ENCODE measurements at regions of chr22 and their contacts with region 1.

Region 1: DNA sequence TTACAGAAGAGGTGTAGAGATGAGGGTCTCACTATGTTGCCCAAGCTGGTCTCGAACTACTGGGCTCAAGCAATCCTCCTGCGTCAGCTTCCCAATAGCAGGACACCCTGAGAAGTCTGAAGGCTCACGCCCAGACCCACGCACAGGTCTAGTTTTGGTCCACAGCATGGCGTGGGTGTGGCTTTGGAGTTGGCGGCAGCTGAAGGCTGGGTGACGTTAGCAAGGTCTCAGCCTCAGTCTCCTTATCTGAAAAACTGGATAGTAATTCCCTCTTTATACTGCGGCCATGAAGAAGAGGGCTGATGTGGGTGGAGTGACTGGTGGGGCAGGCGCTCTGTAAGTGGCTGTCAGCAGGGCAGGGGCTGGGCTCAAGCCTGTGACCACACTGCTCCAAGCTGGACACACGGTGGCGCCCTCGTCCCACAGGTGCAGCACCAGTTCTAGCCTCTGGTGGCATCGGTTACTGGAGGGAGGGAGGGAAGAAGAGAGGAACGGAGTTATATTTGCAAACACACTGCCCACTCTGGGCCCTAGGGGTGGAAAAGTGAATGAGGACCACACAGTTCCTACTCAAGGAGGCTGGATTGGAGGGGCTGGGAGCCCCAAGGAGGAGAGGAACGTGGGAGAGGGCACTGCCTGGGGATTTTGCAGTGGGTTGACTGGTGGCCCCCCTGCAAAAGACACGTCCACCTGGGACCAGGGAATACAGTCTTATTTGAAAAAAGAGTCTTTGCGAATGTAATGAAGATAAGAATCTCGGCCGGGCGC is 19.6 kb upstream of the CARD10 start:
- DNase-seq: peak; percentile 96
- H3K4me3 ChIP-seq: no peak overlapping the region
- H3K27ac ChIP-seq: no peak overlapping the region
- H3K4me1 ChIP-seq: peaks cover 11% of the 10 kb centered on the region
- H3K27me3 ChIP-seq: no peaks in the 10 kb centered on the region
- CTCF ChIP-seq: peak; percentile 95

Region 2: DNA sequence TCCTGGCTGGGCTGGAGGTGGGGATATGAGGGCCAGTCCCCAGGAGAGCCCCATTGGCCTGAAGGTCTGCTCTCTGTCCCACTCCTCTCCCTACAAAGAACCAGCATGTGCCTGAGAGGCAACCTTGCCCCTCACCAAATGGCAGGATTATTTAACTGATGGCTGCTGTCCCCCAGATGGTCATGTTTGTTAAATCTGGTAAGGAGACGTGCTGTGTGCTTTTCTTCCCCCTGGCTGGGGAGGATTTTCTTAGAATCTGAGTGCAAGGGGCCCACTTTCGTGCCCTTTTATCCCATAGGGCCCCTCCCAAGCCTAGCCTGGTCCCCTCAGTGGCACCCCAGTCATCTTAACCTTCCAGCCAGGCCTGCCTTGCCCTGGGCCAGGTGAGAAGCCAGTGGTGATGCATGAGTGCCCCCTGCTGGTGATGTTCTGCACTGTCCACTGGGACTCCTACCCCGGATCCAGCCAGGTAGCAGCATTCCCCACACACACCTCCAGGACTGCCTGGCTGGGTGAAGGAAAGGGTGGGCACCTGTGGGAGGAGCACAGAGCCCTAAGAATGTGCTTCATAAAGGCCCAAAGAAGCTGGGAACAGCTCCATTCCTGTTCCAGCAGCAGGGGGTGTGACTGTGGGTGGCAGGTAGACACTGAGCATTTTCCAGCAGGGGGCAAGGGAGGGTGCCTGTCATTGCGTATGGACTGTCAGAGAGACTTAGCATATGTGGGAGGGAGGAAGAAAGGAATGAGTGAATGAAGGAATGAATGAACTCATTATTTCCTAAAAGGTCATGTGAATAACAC is 81.5 kb before region 1 on chr22:
- intact Hi-C with region 1: no loop called
- DNase-seq: peak; percentile 86
- H3K4me3 ChIP-seq: no peak overlapping the region
- H3K27ac ChIP-seq: no peak overlapping the region
- H3K4me1 ChIP-seq: no peaks in the 10 kb centered on the region
- H3K27me3 ChIP-seq: no peaks in the 10 kb centered on the region
- CTCF ChIP-seq: peak; percentile 81

Region 3: GRCh38 chr22:37578002-37578401 is 39.2 kb after region 1 on chr22:
- intact Hi-C with region 1: loop called (anchors 5 kb)
- DNase-seq: no peak
- H3K4me3 ChIP-seq: no peak overlapping the region
- H3K27ac ChIP-seq: no peak overlapping the region
- H3K4me1 ChIP-seq: peaks cover 9% of the 10 kb centered on the region
- H3K27me3 ChIP-seq: no peaks in the 10 kb centered on the region
- CTCF ChIP-seq: no peak

Region 4: GRCh38 chr22:37594237-37594636 is 55.5 kb after region 1 on chr22:
- intact Hi-C with region 1: loop called (anchors 2 kb)
- DNase-seq: no peak
- H3K4me3 ChIP-seq: no peak overlapping the region
- H3K27ac ChIP-seq: no peak overlapping the region
- H3K4me1 ChIP-seq: peaks cover 4% of the 10 kb centered on the region
- H3K27me3 ChIP-seq: no peaks in the 10 kb centered on the region
- CTCF ChIP-seq: no peak